Activated T-helper 2 cell treated with anti-CD3 and anti-CD28 coated beads, Interferon-gamma antibody, Interleukin-2, Interleukin-4, amounts not matched to agents 10 μg/mL and 5 μg/mL and 100 μg/mL, durations not matched to agents 14 hours and 24 hours and 36 hours (primary cell): ENCODE measurements at regions of chr6 and their contacts with region 1.

Region 1: GRCh38 chr6:49550492-49551077 is at the start of gene C6orf141:
- DNase-seq: peak; percentile 18
- H3K4me3 Mint-ChIP-seq: peak within 1 kb of the TSS; percentile 75
- H3K27ac Mint-ChIP-seq: no peak within 1 kb of the TSS
- H3K4me1 Mint-ChIP-seq: peaks cover 14% of the 10 kb centered on the region
- H3K27me3 Mint-ChIP-seq: peaks cover 40% of the 10 kb centered on the region
- total RNA-seq, gene C6orf141: not detected in 2 replicates

Region 2: DNA sequence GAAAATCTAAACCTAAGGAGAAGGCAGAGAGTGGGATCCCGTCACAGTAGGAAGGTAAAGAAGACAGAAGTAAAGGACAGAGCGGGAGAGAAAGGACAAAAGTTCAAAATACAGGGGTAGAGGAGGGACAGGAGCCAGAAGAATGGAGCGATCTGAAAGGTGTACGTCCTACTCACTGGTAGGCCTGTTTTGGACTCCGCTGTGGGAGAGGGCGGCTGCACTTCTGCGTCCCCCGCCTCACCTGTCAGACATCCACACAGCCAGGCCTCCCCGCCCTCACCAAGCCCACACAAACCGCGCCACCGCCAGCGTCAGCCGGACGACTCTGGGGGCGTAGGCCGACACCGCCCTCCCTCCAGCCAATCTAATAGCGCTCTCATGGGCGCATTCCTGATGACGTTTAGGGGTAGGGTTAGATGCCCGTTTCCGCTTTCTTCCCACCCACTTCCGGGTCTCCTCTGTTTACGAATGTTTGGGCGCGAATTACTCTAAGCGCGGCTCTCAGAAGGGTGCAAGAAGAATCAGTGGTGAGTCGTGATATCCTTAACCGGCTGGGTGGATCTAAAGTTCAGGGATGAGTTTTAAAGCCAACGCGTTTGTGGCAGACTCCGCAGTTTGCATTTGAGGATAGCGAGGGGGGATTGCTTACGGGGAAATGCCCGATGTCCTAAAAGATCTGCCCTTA is 87.5 kb before region 1 on chr6 and contains the starts of genes CENPQ and MMUT:
- intact Hi-C with region 1: loop called (anchors 5 kb)
- DNase-seq: peak; percentile 91
- H3K4me3 Mint-ChIP-seq: peak within 1 kb of the TSS; percentile 99
- H3K27ac Mint-ChIP-seq: peak within 1 kb of the TSS; percentile 97
- H3K4me1 Mint-ChIP-seq: peaks cover 36% of the 10 kb centered on the region
- H3K27me3 Mint-ChIP-seq: no peaks in the 10 kb centered on the region
- total RNA-seq, gene CENPQ: 13.9 and 14.1 TPM in 2 replicates
- total RNA-seq, gene MMUT: 13.5 and 14.3 TPM in 2 replicates

Region 3: GRCh38 chr6:49772285-49772684 is 221.7 kb after region 1 on chr6:
- intact Hi-C with region 1: no loop called
- DNase-seq: no peak
- H3K4me3 Mint-ChIP-seq: no peak overlapping the region
- H3K27ac Mint-ChIP-seq: no peak overlapping the region
- H3K4me1 Mint-ChIP-seq: no peaks in the 10 kb centered on the region
- H3K27me3 Mint-ChIP-seq: no peaks in the 10 kb centered on the region